Activated naive CD4-positive, alpha-beta T cell treated with anti-CD3 and anti-CD28 coated beads for 36 hours (primary cell): ENCODE measurements at regions of chr17 and their contacts with region 1.

Region 1: GRCh38 chr17:36486204-36487194 is at the start of gene ZNHIT3:
- DNase-seq: peak; percentile 95
- H3K4me3 Mint-ChIP-seq: peak within 1 kb of the TSS; percentile 100
- H3K27ac Mint-ChIP-seq: peak within 1 kb of the TSS; percentile 98
- H3K4me1 Mint-ChIP-seq: peaks cover 51% of the 10 kb centered on the region
- H3K27me3 Mint-ChIP-seq: peaks cover 10% of the 10 kb centered on the region
- total RNA-seq, gene ZNHIT3: 39.0 to 43.7 TPM

Region 2: DNA sequence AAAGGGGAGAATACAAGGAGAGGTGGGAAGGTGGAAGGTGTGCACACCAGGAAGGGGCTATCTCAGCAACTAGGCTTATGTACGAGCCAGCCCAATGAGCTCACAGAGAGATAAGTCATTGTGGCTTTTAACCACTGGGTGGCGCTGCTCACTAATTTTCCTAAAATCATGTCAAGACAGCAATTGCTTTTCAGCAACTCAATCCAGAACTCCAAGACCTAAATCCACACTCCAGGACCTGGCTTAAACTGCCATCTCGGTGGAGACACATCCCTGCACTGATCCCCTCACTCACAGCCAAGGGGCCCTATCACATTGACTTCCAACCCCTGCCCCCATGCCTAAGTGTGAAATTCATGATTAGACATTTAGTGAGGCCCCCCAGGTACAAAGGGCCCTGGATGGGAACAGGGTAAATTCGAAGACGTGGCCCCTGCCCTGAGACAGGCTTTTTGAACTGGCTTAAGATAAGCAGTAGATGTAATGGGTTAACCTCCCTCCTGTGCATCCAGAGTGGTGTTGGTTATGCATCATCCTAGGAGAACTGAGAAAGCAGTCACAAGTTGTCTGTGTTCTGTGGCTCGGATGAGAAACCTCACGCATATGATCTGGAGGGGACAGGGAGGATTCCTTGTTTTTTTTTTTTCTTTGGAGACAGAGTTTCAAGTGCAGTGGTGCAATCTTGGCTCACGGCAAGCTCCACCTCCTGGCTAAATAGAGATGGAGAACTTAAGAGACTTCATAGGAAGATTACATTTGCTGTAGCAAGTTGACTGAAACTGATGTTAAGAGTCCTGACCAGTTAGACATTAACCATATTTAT is 516.7 kb before region 1 on chr17:
- CTCF ChIA-PET with region 1: interaction called, 3 read pairs
- intact Hi-C with region 1: loop called (anchors 1 kb)
- DNase-seq: peak; percentile 90
- H3K4me3 Mint-ChIP-seq: no peak overlapping the region
- H3K27ac Mint-ChIP-seq: no peak overlapping the region
- H3K4me1 Mint-ChIP-seq: no peaks in the 10 kb centered on the region
- H3K27me3 Mint-ChIP-seq: peaks cover 2% of the 10 kb centered on the region

Region 3: DNA sequence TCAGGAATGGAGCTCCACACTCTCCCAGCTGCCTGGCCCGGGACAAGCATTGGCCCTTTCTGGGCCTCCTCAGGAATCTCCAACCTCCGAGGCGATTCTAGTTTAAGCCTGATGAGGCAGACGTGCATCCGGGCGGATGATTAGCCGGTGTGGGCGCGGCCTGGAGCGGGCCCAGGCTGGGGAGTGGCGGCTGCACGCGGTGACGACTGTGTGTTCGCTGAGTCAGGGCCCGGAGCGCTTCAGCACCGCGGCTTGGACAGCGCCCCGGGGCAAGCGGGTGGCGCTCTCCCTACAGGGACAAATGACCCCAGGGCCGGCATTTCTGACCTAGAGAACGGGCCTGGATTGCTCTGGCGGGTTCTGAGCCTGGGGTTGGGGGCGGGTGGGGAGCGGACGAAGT is 22.6 kb before region 1 on chr17:
- CTCF ChIA-PET with region 1: no interaction called
- intact Hi-C with region 1: loop called (anchors 1 kb)
- DNase-seq: peak; percentile 79
- H3K4me3 Mint-ChIP-seq: no peak overlapping the region
- H3K27ac Mint-ChIP-seq: no peak overlapping the region
- H3K4me1 Mint-ChIP-seq: no peaks in the 10 kb centered on the region
- H3K27me3 Mint-ChIP-seq: peaks cover 49% of the 10 kb centered on the region

Region 4: DNA sequence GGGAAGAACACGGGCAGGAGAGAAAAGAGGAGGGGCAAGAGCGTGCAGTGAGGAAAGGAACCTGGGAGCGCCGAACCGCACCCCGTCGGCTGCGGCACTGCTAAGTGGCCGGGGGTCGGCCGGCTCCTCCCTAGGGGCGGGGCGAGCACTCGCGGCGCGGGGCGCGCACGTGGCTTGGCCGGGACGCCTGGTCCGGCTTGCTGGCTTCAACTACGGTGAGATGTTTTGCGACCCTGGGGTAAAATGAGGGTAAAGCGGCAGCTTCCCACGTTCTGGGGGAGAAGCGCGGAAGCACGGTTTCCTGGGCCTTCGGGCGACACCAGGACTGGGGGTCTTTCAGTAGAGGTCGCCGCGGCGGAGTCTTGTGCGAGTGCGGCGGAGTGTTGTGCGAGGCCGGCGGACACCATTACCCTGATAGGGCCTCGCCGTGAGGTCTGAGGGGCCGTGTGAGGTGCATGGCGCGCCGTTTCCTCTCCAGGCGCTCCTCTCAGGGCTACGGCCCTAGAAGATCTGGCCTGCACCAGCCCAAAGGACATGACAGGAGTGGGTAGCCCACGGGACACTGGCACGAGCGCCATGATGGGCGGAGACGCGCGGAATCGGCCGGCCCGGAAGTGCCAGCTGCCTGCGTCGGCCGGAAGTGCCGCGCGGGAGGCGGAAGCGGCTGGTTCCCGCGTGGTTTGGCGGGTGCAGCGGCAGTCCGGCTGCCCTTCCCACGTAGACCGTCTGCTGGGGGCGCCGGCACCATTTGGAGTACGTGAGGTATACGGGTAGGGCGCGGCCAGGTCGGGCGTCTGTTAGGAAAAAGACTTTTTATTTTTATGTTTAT is 48.6 kb after region 1 on chr17 and contains the starts of genes MYO19 and PIGW:
- CTCF ChIA-PET with region 1: no interaction called
- intact Hi-C with region 1: loop called (anchors 2 kb)
- DNase-seq: peak; percentile 86
- H3K4me3 Mint-ChIP-seq: peak within 1 kb of the TSS; percentile 98
- H3K27ac Mint-ChIP-seq: peak within 1 kb of the TSS; percentile 96
- H3K4me1 Mint-ChIP-seq: peaks cover 48% of the 10 kb centered on the region
- H3K27me3 Mint-ChIP-seq: no peaks in the 10 kb centered on the region
- total RNA-seq, gene MYO19: 99.6 to 107 TPM
- total RNA-seq, gene PIGW: 10.6 to 11.3 TPM

Region 5: GRCh38 chr17:36545465-36546417 is 59.2 kb after region 1 on chr17:
- CTCF ChIA-PET with region 1: no interaction called
- intact Hi-C with region 1: loop called (anchors 2 kb)
- DNase-seq: peak; percentile 98
- H3K4me3 Mint-ChIP-seq: peak overlapping the region; percentile 86
- H3K27ac Mint-ChIP-seq: peak overlapping the region; percentile 94
- H3K4me1 Mint-ChIP-seq: peaks cover 44% of the 10 kb centered on the region
- H3K27me3 Mint-ChIP-seq: no peaks in the 10 kb centered on the region